Activated naive CD4-positive, alpha-beta T cell treated with anti-CD3 and anti-CD28 coated beads for 36 hours (primary cell): ENCODE measurements at regions of chr16 and their contacts with region 1.

Region 1: DNA sequence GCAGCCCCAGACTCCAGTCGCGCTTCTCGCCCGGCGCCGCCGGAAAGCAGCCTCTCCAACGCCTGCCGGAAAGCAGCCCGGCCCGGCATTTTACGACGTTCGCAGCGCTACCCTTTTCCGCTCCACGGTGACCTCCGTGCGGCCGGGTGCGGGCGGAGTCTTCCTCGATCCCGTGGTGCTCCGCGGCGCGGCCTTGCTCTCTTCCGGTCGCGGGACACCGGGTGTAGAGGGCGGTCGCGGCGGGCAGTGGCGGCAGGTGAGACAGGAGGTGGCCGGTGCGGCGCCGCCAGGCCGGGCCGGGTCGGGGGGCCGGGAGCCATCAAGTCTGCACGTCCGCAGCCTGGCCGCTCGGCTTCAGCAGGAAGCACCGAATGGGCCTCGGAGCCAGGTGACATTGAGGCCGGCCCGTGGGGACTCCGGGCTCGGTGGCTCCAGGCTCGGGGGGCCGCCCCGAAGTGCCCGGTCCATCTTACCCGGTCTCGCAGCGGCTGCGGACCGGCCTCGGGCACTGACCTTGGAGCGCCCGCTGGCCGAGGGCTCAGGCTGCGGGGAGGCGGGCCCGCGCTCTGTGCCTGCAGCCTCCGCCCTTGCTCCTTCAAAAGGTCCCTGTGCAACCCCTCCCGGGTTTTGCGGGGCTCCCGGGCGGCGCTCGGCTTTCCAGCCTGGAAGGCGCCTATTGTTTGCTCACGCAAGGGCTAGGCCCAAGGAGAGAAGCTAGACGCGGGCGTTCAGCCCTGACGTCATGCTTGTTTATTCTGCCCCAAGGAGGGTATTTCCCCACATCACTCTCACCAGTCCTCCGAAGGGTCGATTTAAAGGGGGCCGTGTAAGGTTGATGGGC is at the starts of genes COX4I1 and EMC8:
- DNase-seq: peak; percentile 97
- H3K4me3 Mint-ChIP-seq: peak within 1 kb of the TSS; percentile 86
- H3K27ac Mint-ChIP-seq: peak within 1 kb of the TSS; percentile 88
- H3K4me1 Mint-ChIP-seq: peaks cover 56% of the 10 kb centered on the region
- H3K27me3 Mint-ChIP-seq: no peaks in the 10 kb centered on the region
- total RNA-seq, gene COX4I1: 563 to 568 TPM
- total RNA-seq, gene EMC8: 28.5 to 31.6 TPM

Region 2: DNA sequence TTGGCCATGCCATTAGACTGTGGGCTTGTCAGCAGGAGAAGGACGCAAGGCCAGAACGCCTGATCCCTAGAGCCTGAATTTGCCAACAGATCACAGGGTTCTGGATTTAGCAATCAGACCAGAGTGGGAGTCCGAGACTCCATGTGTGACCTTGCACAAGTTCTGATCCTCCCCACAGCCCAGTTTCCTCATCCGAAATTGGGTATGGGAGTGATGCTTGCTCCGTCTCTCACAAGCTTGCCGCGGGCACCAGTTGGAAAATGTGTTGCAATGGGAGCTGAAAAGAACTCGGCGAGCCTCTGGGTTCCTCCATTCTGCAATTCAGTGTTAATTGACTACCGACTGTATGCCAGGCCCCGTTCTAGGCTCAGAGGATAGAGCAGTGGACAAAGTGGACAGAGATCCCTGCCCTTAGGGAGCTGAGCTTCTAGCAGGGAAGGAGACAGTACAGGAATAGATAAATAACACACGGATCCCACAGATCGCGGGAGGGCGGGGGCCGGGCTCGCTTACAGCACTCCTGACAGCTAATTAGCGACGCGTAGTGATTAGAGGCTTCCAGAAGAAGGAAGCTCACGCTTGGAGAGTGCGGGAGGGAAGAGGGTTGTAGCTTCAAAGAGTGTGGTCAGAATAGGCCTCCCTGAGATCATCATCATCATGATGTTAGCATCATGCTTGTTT is 537.0 kb before region 1 on chr16:
- CTCF ChIA-PET with region 1: no interaction called
- intact Hi-C with region 1: no loop called
- DNase-seq: no peak
- H3K4me3 Mint-ChIP-seq: no peak overlapping the region
- H3K27ac Mint-ChIP-seq: no peak overlapping the region
- H3K4me1 Mint-ChIP-seq: peaks cover 5% of the 10 kb centered on the region
- H3K27me3 Mint-ChIP-seq: peaks cover 5% of the 10 kb centered on the region

Region 3: DNA sequence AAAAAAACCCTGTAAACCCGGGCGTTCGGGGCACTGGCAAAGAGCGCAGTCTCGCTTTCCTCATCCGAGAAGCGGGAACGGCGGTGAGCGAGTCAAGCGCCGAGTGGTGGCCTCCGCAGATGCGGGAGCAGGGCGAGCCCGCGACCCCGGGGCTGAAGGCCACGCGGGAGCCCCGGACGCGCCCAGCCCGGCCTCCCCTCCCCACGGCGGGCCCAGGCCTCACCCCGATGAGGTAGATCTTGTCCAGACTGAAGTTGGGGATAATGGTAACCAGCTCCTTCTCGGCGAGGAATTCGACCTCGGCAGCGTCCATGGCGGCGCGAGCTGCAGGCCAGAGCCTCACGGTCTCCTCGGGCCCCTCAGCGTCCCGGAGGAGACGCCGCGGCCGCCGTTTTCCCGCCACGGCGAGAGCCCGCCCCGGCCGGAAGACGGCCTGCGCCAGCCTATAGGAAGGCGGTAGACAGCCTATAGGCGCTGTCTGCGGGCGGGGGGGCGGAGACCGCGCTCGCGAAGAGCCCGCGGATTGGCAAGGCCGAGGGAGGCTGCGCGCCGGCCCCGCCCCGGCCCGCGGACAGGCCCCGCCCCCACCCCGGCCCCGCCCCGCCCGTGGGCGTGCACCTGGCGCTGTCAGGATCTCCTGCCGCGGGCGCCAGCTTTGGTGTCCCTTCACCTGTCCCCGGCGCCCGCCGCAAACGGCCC is 111.0 kb before region 1 on chr16 and contains the start of gene GINS2:
- CTCF ChIA-PET with region 1: no interaction called
- intact Hi-C with region 1: loop called (anchors 1 kb)
- DNase-seq: peak; percentile 93
- H3K4me3 Mint-ChIP-seq: peak within 1 kb of the TSS; percentile 84
- H3K27ac Mint-ChIP-seq: peak within 1 kb of the TSS; percentile 66
- H3K4me1 Mint-ChIP-seq: peaks cover 21% of the 10 kb centered on the region
- H3K27me3 Mint-ChIP-seq: peaks cover 2% of the 10 kb centered on the region
- total RNA-seq, gene GINS2: 60.7 to 66.6 TPM

Region 4: GRCh38 chr16:85735225-85735635 is 64.5 kb before region 1 on chr16:
- CTCF ChIA-PET with region 1: no interaction called
- intact Hi-C with region 1: loop called (anchors 2 kb)
- DNase-seq: peak; percentile 72
- H3K4me3 Mint-ChIP-seq: peak overlapping the region; percentile 3
- H3K27ac Mint-ChIP-seq: no peak overlapping the region
- H3K4me1 Mint-ChIP-seq: peaks cover 26% of the 10 kb centered on the region
- H3K27me3 Mint-ChIP-seq: no peaks in the 10 kb centered on the region

Region 5: DNA sequence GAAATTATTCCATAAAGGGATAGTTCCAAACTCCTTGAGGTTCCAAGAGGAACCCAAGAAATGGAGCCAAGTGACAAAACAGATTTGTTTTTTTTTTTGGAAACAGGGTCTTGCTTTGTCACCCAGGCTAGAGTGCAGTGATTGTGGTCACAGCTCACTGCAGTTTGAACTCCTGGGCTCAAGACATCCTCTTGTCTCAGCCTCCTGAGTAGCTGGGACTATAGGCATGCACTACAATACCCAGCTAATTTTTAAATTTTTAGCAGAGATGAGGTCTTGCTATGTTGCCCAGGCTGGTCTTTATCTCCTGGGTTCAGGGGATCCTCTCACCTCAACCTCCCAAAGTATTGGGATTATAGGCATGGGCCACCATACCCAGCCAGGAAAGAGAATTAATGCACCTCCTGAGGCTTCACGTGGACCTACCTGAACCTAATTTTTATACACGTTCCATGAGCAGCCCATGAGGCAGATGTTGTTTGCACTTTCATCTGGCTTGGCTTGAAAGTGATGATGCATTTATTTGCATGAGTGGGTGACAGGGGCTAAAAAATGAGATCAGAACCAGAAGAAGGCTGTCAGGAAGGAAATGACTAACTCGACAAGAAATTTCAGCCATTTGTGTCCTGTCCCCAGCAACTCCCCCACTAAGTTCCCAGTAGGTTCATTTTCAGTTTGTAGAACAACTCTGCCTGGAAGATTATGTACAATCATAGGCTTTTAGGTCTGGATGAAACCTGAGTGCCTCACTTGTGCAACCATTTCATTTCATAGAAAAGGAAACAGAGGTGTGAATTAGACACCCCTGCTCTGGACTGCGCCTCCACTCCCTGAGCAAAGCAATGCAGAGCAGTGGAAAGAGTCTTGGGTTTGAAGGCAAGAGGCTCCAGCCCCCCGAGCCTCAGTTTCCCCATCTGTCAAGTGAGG is 89.0 kb after region 1 on chr16:
- CTCF ChIA-PET with region 1: no interaction called
- intact Hi-C with region 1: no loop called
- DNase-seq: peak; percentile 73
- H3K4me3 Mint-ChIP-seq: no peak overlapping the region
- H3K27ac Mint-ChIP-seq: peak overlapping the region; percentile 85
- H3K4me1 Mint-ChIP-seq: peaks cover 44% of the 10 kb centered on the region
- H3K27me3 Mint-ChIP-seq: peaks cover 13% of the 10 kb centered on the region